ENCODE measurements at regions of chr12 and their contacts with region 1.

Region 1: GRCh38 chr12:7018350-7019042 is at the start of gene LPCAT3:
- DNase-seq: peak; percentile 98
- ATAC-seq: peak; percentile 98
- H3K4me3 Mint-ChIP-seq: peak within 1 kb of the TSS; percentile 83
- H3K27ac Mint-ChIP-seq: peak within 1 kb of the TSS; percentile 80
- H3K4me1 Mint-ChIP-seq: peaks cover 29% of the 10 kb centered on the region
- H3K27me3 Mint-ChIP-seq: no peaks in the 10 kb centered on the region
- total RNA-seq, gene LPCAT3: 20.8 to 28.0 TPM

Region 2: GRCh38 chr12:6867413-6868210 is 150.9 kb before region 1 on chr12 and contains the start of gene TPI1:
- CTCF ChIA-PET with region 1: interaction called, 4 read pairs
- POLR2A ChIA-PET with region 1: no interaction called
- intact Hi-C with region 1: loop called in 1 of 2 experiments (anchors 1 kb)
- DNase-seq: peak; percentile 91
- ATAC-seq: peak; percentile 68
- H3K4me3 Mint-ChIP-seq: peak within 1 kb of the TSS; percentile 93
- H3K27ac Mint-ChIP-seq: peak within 1 kb of the TSS; percentile 95
- H3K4me1 Mint-ChIP-seq: peaks cover 47% of the 10 kb centered on the region
- H3K27me3 Mint-ChIP-seq: no peaks in the 10 kb centered on the region
- total RNA-seq, gene TPI1: 1,824 to 2,753 TPM

Region 3: DNA sequence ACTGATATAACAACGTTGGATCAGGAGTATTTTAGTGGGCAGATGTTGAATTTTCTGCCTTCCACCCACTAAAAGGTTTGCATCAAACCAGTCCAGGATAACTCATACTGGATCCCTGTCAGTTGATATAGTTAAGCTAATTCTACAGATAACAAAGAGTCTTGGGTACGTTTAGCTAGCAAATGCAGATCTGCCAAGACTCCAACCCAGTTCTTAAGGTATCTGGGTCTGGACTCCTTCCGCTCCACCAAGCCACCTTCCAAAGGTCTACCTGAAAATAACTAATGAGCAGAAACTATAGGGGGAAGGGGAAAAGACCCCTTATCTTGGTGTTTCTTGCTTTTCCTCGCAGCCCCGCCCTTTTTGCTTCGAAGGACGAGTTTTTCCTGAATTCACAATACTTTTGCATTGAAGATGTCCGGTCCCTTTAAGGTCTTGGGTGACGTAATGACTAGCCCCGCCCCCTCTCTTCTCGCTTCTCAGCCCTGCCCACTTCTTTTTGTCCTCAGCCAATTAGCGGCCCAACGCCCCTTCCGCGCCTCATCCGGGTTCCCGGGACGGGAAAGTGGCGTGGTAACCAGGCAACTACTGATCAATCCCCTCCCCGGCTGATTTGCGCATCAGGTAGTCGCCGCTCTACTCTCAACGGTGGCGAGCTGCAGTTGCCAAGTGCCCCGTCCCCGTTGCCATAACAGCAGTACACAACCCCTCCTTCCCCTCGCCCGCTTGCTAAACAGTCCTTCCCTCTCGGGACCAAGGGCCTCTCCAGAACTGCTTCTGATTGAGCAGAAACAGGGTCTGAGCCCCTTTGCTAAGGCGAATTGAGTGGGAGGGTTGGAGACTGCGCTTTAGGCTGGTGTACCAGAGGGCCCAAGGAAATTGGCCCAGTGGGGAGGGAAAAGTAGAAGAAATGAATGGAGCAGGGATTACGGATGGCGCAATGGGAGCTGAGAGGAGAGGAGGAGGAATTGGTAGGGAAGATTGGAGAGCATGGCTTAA is 113.9 kb before region 1 on chr12 and contains the start of gene LRRC23:
- CTCF ChIA-PET with region 1: interaction called, 4 read pairs
- POLR2A ChIA-PET with region 1: no interaction called
- intact Hi-C with region 1: loop called in 1 of 2 experiments (anchors 1 kb)
- DNase-seq: peak; percentile 99
- ATAC-seq: peak; percentile 97
- H3K4me3 Mint-ChIP-seq: no peak within 1 kb of the TSS
- H3K27ac Mint-ChIP-seq: no peak within 1 kb of the TSS
- H3K4me1 Mint-ChIP-seq: peaks cover 14% of the 10 kb centered on the region
- H3K27me3 Mint-ChIP-seq: no peaks in the 10 kb centered on the region
- total RNA-seq, gene LRRC23: 6.4 to 7.0 TPM

Region 4: GRCh38 chr12:6937481-6938297 is 80.8 kb before region 1 on chr12:
- CTCF ChIA-PET with region 1: interaction called, 3 read pairs
- POLR2A ChIA-PET with region 1: interaction called, 3 read pairs
- intact Hi-C with region 1: loop called in 1 of 2 experiments (anchors 1 kb)
- DNase-seq: peak; percentile 97
- ATAC-seq: peak; percentile 93
- H3K4me3 Mint-ChIP-seq: peak overlapping the region; percentile 83
- H3K27ac Mint-ChIP-seq: peak overlapping the region; percentile 96
- H3K4me1 Mint-ChIP-seq: peaks cover 52% of the 10 kb centered on the region
- H3K27me3 Mint-ChIP-seq: no peaks in the 10 kb centered on the region

Region 5: DNA sequence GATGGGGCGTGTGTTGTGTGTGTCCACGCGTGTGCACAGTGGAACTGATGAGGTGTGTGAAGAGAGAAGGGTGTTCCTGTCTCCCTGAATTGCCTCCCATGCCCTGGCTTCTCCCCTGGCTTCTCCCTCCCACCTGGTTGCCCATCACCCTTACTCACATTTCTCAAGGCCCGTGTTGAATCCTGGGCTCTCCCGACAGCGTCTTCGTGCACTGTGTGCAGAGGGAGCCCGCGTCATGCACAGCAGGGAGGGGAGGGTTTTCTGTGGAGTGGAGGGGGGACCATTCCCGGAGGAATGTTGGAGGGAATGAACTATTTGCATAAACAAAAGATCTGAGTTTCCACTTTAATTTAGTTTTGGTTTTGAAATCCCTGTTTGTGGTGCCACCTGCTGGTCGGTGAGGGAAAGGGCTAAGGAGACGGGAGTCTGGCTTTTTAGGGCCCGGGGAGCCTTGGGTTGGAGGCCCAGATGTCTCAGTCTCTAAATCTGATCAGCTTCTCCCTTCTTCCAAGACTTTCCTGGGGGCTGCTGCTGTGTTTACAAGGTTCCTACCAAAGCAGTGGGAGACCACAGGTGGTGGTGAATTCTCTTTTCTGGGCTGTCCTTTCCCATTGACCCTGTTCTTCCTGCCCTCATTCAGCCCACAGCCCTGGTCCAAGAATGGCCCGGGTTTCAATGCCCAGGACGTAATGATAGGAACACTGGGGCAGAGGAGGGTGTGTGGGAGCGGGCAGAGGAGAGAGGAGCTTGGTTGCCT is 73.9 kb after region 1 on chr12 and contains the start of gene C1R:
- CTCF ChIA-PET with region 1: interaction called, 5 read pairs
- POLR2A ChIA-PET with region 1: no interaction called
- intact Hi-C with region 1: loop called in 1 of 2 experiments (anchors 1 kb)
- DNase-seq: peak; percentile 85
- ATAC-seq: peak; percentile 86
- H3K4me3 Mint-ChIP-seq: peak within 1 kb of the TSS; percentile 59
- H3K27ac Mint-ChIP-seq: peak within 1 kb of the TSS; percentile 80
- H3K4me1 Mint-ChIP-seq: peaks cover 6% of the 10 kb centered on the region
- H3K27me3 Mint-ChIP-seq: no peaks in the 10 kb centered on the region
- total RNA-seq, gene C1R: 1.4 to 2.2 TPM

Region 6: GRCh38 chr12:7129872-7130680 is 111.6 kb after region 1 on chr12 and contains the start of gene CLSTN3:
- CTCF ChIA-PET with region 1: no interaction called
- POLR2A ChIA-PET with region 1: no interaction called
- intact Hi-C with region 1: loop called in 1 of 2 experiments (anchors 1 kb)
- DNase-seq: peak; percentile 93
- ATAC-seq: peak; percentile 89
- H3K4me3 Mint-ChIP-seq: peak within 1 kb of the TSS; percentile 80
- H3K27ac Mint-ChIP-seq: peak within 1 kb of the TSS; percentile 74
- H3K4me1 Mint-ChIP-seq: peaks cover 31% of the 10 kb centered on the region
- H3K27me3 Mint-ChIP-seq: no peaks in the 10 kb centered on the region
- total RNA-seq, gene CLSTN3: 28.2 to 37.9 TPM

Measured in activated CD4-positive, alpha-beta T cell treated with anti-CD3 and anti-CD28 coated beads for 36 hours (primary cell).